Naive thymus-derived CD4-positive, alpha-beta T cell (primary cell): ENCODE measurements at regions of chr5 and their contacts with region 1.

Region 1: DNA sequence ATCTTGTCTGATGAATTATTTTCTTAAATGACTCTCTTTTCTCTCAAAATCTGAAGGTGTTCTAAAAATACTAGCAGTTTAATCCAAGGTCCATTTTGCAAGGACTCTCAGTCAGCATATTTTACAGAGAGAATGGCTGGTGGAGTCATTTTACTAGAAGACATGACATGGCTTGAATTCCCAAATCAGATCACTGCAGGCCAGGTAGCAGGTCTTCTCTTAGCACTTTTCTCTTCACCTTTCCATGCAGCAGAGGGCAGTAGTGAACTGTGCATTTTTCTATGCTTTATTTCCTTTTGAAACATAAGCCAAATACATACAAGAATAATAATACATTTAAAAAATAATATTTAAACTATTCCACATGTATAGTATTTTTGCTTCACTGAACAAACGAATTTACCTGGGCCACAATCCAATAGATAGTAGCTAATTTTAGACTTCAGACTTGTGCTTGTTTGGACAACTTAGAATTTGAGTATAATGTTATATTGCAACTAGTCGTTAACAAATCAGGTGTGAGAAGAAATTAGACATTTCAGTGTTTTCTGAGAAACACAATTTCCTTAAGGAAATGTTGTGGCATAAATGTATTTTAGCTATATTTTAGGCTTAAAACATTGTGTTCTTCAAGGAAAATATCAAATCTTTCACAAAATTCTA is 289.4 kb upstream of the DAB2 start:
- DNase-seq: peak in 7 of 9 donors; percentile 4 to 51 (median 33)
- ATAC-seq: peak; percentile 63
- H3K4me3 ChIP-seq: no peak overlapping the region
- H3K4me3 Mint-ChIP-seq: no peak overlapping the region
- H3K27ac ChIP-seq: no peak overlapping the region
- H3K27ac Mint-ChIP-seq: no peak overlapping the region
- H3K4me1 ChIP-seq: no peaks in the 10 kb centered on the region
- H3K4me1 Mint-ChIP-seq: no peaks in the 10 kb centered on the region
- H3K27me3 ChIP-seq: no peaks in the 10 kb centered on the region
- H3K27me3 Mint-ChIP-seq: peaks cover 2 to 12% (median 9%) of the 10 kb centered on the region in 5 donors

Region 2: DNA sequence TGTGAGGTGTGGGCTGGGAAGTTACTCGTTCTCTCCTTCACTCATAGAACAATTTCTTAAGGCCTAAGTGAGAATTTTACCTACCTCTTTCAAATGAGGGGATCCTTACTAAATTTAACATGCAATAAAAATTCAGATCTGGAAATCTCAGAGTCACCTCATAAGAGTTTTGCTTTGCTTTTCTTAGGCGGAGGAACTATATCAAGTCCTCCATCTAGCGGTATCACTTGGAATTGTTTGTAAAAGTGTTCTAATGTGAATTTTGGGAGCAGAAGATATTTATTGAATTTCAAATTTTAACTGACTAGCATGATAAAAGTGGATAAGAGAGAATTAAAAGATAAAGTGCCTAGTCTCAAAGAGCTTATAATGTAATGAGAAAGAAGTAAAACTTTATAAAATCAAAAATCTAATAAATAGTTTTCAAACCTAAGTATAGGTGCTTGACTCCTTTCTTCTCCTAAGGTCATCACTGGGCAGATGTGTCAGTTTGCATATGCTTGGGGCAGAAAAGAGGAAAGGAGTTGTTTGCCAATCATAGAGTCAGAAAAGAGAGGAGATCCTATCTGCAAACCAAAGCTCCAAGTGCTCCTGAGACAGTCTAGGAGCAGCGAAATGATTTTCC is 143.7 kb before region 1 on chr5:
- CTCF ChIA-PET with region 1: no interaction called
- POLR2A ChIA-PET with region 1: no interaction called
- intact Hi-C with region 1: loop called in 1 of 2 experiments (anchors 10 kb)
- DNase-seq: peak in 5 of 9 donors; percentile 8 to 31 (median 27)
- ATAC-seq: peak; percentile 36
- H3K4me3 ChIP-seq: no peak overlapping the region
- H3K4me3 Mint-ChIP-seq: no peak overlapping the region
- H3K27ac ChIP-seq: no peak overlapping the region
- H3K27ac Mint-ChIP-seq: no peak overlapping the region
- H3K4me1 ChIP-seq: no peaks in the 10 kb centered on the region
- H3K4me1 Mint-ChIP-seq: peaks cover 0 to 3% (median 0%) of the 10 kb centered on the region in 7 donors
- H3K27me3 ChIP-seq: no peaks in the 10 kb centered on the region
- H3K27me3 Mint-ChIP-seq: peaks cover 0 to 29% (median 10%) of the 10 kb centered on the region in 5 donors

Region 3: DNA sequence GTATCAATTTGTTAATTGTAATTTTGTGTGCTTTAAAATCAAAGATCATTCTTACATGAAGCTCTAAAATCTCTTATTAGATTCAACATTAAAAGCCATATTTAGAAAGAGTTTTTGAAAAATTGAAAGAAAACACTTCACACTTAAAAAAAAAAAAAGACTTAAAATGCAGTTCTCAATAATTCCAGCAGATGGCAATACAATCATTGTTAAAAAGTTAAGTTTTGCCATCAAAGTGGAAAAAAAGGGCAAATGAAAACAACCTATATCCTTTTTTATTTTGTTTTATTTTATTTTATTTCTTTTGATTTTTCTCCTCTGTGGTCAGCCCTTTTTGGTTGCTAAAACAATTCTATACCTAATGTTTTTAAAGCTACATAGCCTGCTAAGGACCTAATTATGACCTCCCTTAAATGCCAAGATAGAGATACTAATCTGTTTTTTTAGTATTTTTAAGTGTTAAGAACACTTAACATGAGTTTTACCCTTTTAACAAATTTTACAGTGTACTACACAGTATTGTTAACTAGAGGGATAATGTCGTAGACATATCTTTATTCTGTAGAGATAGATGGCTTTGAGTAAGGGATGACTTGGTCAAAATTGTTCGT is 135.2 kb before region 1 on chr5:
- CTCF ChIA-PET with region 1: interaction called, 3 read pairs
- POLR2A ChIA-PET with region 1: no interaction called
- intact Hi-C with region 1: loop called (anchors 2 to 10 kb)
- DNase-seq: peak in 6 of 9 donors; percentile 2 to 31 (median 18)
- ATAC-seq: no peak
- H3K4me3 ChIP-seq: no peak overlapping the region
- H3K4me3 Mint-ChIP-seq: no peak overlapping the region
- H3K27ac ChIP-seq: no peak overlapping the region
- H3K27ac Mint-ChIP-seq: no peak overlapping the region
- H3K4me1 ChIP-seq: peaks cover 0 to 9% of the 10 kb centered on the region in 2 donors
- H3K4me1 Mint-ChIP-seq: peaks cover 6 to 17% (median 8%) of the 10 kb centered on the region in 7 donors
- H3K27me3 ChIP-seq: no peaks in the 10 kb centered on the region
- H3K27me3 Mint-ChIP-seq: peaks cover 0 to 23% (median 0%) of the 10 kb centered on the region in 5 donors

Region 4: GRCh38 chr5:39794513-39795210 is 80.5 kb after region 1 on chr5:
- CTCF ChIA-PET with region 1: no interaction called
- POLR2A ChIA-PET with region 1: no interaction called
- intact Hi-C with region 1: no loop called
- DNase-seq: no peak
- ATAC-seq: no peak
- H3K4me3 ChIP-seq: no peak overlapping the region
- H3K4me3 Mint-ChIP-seq: no peak overlapping the region
- H3K27ac ChIP-seq: no peak overlapping the region
- H3K27ac Mint-ChIP-seq: no peak overlapping the region
- H3K4me1 ChIP-seq: no peaks in the 10 kb centered on the region
- H3K4me1 Mint-ChIP-seq: no peaks in the 10 kb centered on the region
- H3K27me3 ChIP-seq: no peaks in the 10 kb centered on the region
- H3K27me3 Mint-ChIP-seq: peaks cover 0 to 2% (median 0%) of the 10 kb centered on the region in 5 donors

Region 5: GRCh38 chr5:39928709-39929108 is 214.5 kb after region 1 on chr5:
- CTCF ChIA-PET with region 1: interaction called, 11 read pairs
- POLR2A ChIA-PET with region 1: no interaction called
- intact Hi-C with region 1: no loop called
- DNase-seq: no peak
- ATAC-seq: no peak
- H3K4me3 ChIP-seq: no peak overlapping the region
- H3K4me3 Mint-ChIP-seq: no peak overlapping the region
- H3K27ac ChIP-seq: no peak overlapping the region
- H3K27ac Mint-ChIP-seq: no peak overlapping the region
- H3K4me1 ChIP-seq: no peaks in the 10 kb centered on the region
- H3K4me1 Mint-ChIP-seq: no peaks in the 10 kb centered on the region
- H3K27me3 ChIP-seq: no peaks in the 10 kb centered on the region
- H3K27me3 Mint-ChIP-seq: peaks cover 18 to 31% (median 27%) of the 10 kb centered on the region in 5 donors

Region 6: DNA sequence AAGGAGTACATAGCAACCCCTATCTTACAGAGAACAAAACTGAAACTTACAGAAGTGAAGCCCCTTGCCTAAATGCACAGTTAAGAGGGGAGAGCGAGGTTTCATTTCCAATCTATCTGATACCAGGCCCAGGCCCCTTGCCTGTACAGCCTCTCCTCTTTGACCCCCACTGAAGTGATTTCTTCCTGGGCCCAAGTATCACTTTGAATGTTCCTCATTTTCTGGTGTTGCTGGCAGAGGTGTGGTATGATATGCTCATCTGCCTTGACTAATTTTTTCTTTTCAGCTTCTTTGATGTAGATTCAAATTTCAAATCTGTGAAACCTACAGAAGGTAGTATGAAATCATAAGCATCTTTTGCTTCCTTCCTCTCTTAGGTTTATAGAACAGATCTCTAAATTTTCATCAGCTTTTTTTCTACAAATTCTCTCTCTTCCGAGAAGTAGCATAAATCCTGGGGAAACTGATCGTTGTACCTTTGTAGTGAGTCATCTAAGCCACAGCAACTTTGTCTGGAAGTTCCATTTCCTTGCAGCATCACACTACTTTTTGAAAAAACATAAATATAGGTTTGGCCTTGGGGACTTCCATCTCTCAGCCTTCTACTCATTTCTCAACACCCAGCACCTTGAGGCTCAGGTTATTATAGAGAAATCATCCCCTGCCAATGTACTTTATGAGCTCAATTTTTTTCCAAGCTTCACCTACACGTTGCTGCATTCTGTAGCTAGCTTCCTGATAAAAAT is 563.2 kb after region 1 on chr5:
- CTCF ChIA-PET with region 1: no interaction called
- POLR2A ChIA-PET with region 1: no interaction called
- intact Hi-C with region 1: no loop called
- DNase-seq: peak in 2 of 9 donors; percentile 6 to 34
- ATAC-seq: peak; percentile 72
- H3K4me3 ChIP-seq: no peak overlapping the region
- H3K4me3 Mint-ChIP-seq: peak overlapping the region in 9 of 10 donors; percentile 7 to 72 (median 42)
- H3K27ac ChIP-seq: peak overlapping the region; percentile 45
- H3K27ac Mint-ChIP-seq: peak overlapping the region; percentile 66 to 88 (median 76)
- H3K4me1 ChIP-seq: peaks cover 9 to 16% of the 10 kb centered on the region in 2 donors
- H3K4me1 Mint-ChIP-seq: peaks cover 18 to 39% (median 33%) of the 10 kb centered on the region in 7 donors
- H3K27me3 ChIP-seq: no peaks in the 10 kb centered on the region
- H3K27me3 Mint-ChIP-seq: no peaks in the 10 kb centered on the region

Region 7: GRCh38 chr5:40502736-40503135 is 788.6 kb after region 1 on chr5:
- CTCF ChIA-PET with region 1: no interaction called
- POLR2A ChIA-PET with region 1: no interaction called
- intact Hi-C with region 1: loop called in 1 of 2 experiments (anchors 5 kb)
- DNase-seq: no peak
- ATAC-seq: no peak
- H3K4me3 ChIP-seq: no peak overlapping the region
- H3K4me3 Mint-ChIP-seq: no peak overlapping the region
- H3K27ac ChIP-seq: no peak overlapping the region
- H3K27ac Mint-ChIP-seq: no peak overlapping the region
- H3K4me1 ChIP-seq: no peaks in the 10 kb centered on the region
- H3K4me1 Mint-ChIP-seq: peaks cover 5 to 14% (median 6%) of the 10 kb centered on the region in 7 donors
- H3K27me3 ChIP-seq: no peaks in the 10 kb centered on the region
- H3K27me3 Mint-ChIP-seq: no peaks in the 10 kb centered on the region

Region 8: GRCh38 chr5:40879163-40879942 is 1165.2 kb after region 1 on chr5:
- CTCF ChIA-PET with region 1: no interaction called
- POLR2A ChIA-PET with region 1: no interaction called
- intact Hi-C with region 1: loop called in 1 of 2 experiments (anchors 1 kb)
- DNase-seq: peak in 5 of 9 donors; percentile 23 to 39 (median 29)
- ATAC-seq: peak; percentile 45
- H3K4me3 ChIP-seq: no peak overlapping the region
- H3K4me3 Mint-ChIP-seq: no peak overlapping the region
- H3K27ac ChIP-seq: no peak overlapping the region
- H3K27ac Mint-ChIP-seq: no peak overlapping the region
- H3K4me1 ChIP-seq: no peaks in the 10 kb centered on the region
- H3K4me1 Mint-ChIP-seq: peaks cover 0 to 5% (median 0%) of the 10 kb centered on the region in 7 donors
- H3K27me3 ChIP-seq: no peaks in the 10 kb centered on the region
- H3K27me3 Mint-ChIP-seq: peaks cover 0 to 9% (median 0%) of the 10 kb centered on the region in 5 donors